MCF 10A (cell line): ENCODE measurements at regions of chr9 and their contacts with region 1.

Region 1: GRCh38 chr9:97768736-97769135 is 71.6 kb upstream of the XPA start:
- DNase-seq: no peak
- H3K4me3 Mint-ChIP-seq: no peak overlapping the region
- H3K27ac Mint-ChIP-seq: no peak overlapping the region
- H3K4me1 Mint-ChIP-seq: peaks cover 47% of the 10 kb centered on the region
- H3K27me3 Mint-ChIP-seq: no peaks in the 10 kb centered on the region
- CTCF ChIP-seq: no peak

Region 2: GRCh38 chr9:97874624-97875023 is 105.9 kb after region 1 on chr9:
- CTCF ChIA-PET with region 1: no interaction called
- POLR2A ChIA-PET with region 1: no interaction called
- intact Hi-C with region 1: loop called (anchors 5 kb)
- DNase-seq: no peak
- H3K4me3 Mint-ChIP-seq: no peak overlapping the region
- H3K27ac Mint-ChIP-seq: peak overlapping the region; percentile 54
- H3K4me1 Mint-ChIP-seq: peaks cover 28% of the 10 kb centered on the region
- H3K27me3 Mint-ChIP-seq: no peaks in the 10 kb centered on the region
- CTCF ChIP-seq: no peak